ENCODE measurements at regions of chr18 and their contacts with region 1.

Region 1: GRCh38 chr18:50819728-50820378 is at the start of gene MRO:
- DNase-seq: peak; percentile 70
- ATAC-seq: peak; percentile 86
- H3K4me3 Mint-ChIP-seq: no peak within 1 kb of the TSS
- H3K27ac Mint-ChIP-seq: no peak within 1 kb of the TSS
- H3K4me1 Mint-ChIP-seq: peaks cover 28% of the 10 kb centered on the region
- H3K27me3 Mint-ChIP-seq: no peaks in the 10 kb centered on the region
- CTCF ChIP-seq: peak; percentile 90
- total RNA-seq, gene MRO: not detected in 2 replicates

Region 2: GRCh38 chr18:50806208-50806616 is 13.6 kb before region 1 on chr18:
- CTCF ChIA-PET with region 1: interaction called, 5 read pairs
- POLR2A ChIA-PET with region 1: interaction called, 3 read pairs
- intact Hi-C with region 1: loop called (anchors 1 kb)
- DNase-seq: no peak
- ATAC-seq: peak; percentile 74
- H3K4me3 Mint-ChIP-seq: peak overlapping the region; percentile 39
- H3K27ac Mint-ChIP-seq: peak overlapping the region; percentile 3
- H3K4me1 Mint-ChIP-seq: peaks cover 39% of the 10 kb centered on the region
- H3K27me3 Mint-ChIP-seq: no peaks in the 10 kb centered on the region
- CTCF ChIP-seq: no peak

Region 3: DNA sequence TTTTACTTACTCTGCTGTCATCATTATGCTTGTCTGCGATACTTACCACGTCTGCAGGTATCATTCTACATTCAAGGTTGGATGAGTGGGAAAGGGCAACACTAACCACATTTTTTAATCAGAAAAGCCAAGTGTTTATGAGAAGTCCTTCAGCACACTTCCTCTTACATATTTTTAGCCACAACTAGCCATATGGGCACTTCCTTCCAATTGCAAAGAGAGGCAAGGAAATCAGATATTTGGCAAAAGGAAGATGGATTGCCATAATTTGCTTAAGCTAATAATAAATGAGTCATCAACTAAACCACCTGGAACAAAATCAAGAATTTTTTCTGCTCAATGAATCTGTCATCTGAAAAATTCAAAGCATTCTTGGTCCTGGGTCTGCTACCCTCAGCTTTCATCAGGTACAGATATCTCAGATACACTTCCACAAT is 16.7 kb after region 1 on chr18:
- CTCF ChIA-PET with region 1: interaction called, 15 read pairs
- POLR2A ChIA-PET with region 1: interaction called, 10 read pairs
- intact Hi-C with region 1: no loop called
- DNase-seq: no peak
- ATAC-seq: peak; percentile 80
- H3K4me3 Mint-ChIP-seq: peak overlapping the region; percentile 16
- H3K27ac Mint-ChIP-seq: peak overlapping the region; percentile 35
- H3K4me1 Mint-ChIP-seq: peaks cover 30% of the 10 kb centered on the region
- H3K27me3 Mint-ChIP-seq: no peaks in the 10 kb centered on the region
- CTCF ChIP-seq: no peak

Region 4: GRCh38 chr18:50878345-50879301 is 58.8 kb after region 1 on chr18 and contains the start of gene ME2:
- CTCF ChIA-PET with region 1: interaction called, 9 read pairs
- POLR2A ChIA-PET with region 1: interaction called, 17 read pairs
- intact Hi-C with region 1: loop called (anchors 1 kb)
- DNase-seq: peak; percentile 98
- ATAC-seq: peak; percentile 94
- H3K4me3 Mint-ChIP-seq: peak within 1 kb of the TSS; percentile 98
- H3K27ac Mint-ChIP-seq: peak within 1 kb of the TSS; percentile 97
- H3K4me1 Mint-ChIP-seq: peaks cover 31% of the 10 kb centered on the region
- H3K27me3 Mint-ChIP-seq: no peaks in the 10 kb centered on the region
- CTCF ChIP-seq: no peak
- total RNA-seq, gene ME2: 58.2 and 63.5 TPM in 2 replicates

Region 5: GRCh38 chr18:50967714-50968661 is 148.1 kb after region 1 on chr18 and contains the start of gene ELAC1:
- CTCF ChIA-PET with region 1: interaction called, 5 read pairs
- POLR2A ChIA-PET with region 1: interaction called, 4 read pairs
- intact Hi-C with region 1: loop called (anchors 1 kb)
- DNase-seq: peak; percentile 75
- ATAC-seq: peak; percentile 95
- H3K4me3 Mint-ChIP-seq: peak within 1 kb of the TSS; percentile 92
- H3K27ac Mint-ChIP-seq: peak within 1 kb of the TSS; percentile 89
- H3K4me1 Mint-ChIP-seq: peaks cover 11% of the 10 kb centered on the region
- H3K27me3 Mint-ChIP-seq: no peaks in the 10 kb centered on the region
- CTCF ChIP-seq: no peak
- total RNA-seq, gene ELAC1: 9.7 and 14.0 TPM in 2 replicates

Region 6: DNA sequence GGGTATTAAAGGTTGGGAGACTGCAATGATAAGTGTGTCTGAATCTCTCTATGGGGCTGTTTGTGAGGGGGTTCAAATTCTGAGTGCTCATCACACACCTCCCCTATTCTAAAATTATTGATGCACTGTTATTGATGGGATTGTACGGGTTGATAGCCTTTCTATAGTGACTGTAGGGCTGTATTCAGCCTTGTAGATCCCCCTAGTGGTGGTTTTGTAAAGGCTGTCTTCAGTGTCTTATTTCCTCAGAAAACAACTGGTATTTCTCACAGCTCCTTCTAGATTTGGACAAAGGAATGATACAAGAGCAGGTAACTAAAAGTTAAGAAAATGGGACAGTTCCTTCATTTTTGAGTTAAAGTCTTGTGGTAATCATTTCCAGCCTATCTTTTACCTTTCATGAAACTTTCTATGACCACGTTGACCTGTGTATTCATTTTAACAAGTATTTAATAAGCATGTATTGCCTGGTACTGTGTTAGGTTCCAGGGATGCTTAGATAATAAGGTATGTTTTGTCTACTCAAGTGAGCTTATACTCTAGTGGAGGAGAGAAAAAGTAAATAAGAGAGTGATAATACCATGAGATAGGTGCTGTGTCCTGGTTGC is 231.4 kb after region 1 on chr18:
- CTCF ChIA-PET with region 1: interaction called, 73 read pairs
- POLR2A ChIA-PET with region 1: interaction called, 5 read pairs
- intact Hi-C with region 1: loop called (anchors 1 kb)
- DNase-seq: no peak
- ATAC-seq: peak; percentile 86
- H3K4me3 Mint-ChIP-seq: no peak overlapping the region
- H3K27ac Mint-ChIP-seq: peak overlapping the region; percentile 15
- H3K4me1 Mint-ChIP-seq: peaks cover 20% of the 10 kb centered on the region
- H3K27me3 Mint-ChIP-seq: no peaks in the 10 kb centered on the region
- CTCF ChIP-seq: peak; percentile 70

Region 7: DNA sequence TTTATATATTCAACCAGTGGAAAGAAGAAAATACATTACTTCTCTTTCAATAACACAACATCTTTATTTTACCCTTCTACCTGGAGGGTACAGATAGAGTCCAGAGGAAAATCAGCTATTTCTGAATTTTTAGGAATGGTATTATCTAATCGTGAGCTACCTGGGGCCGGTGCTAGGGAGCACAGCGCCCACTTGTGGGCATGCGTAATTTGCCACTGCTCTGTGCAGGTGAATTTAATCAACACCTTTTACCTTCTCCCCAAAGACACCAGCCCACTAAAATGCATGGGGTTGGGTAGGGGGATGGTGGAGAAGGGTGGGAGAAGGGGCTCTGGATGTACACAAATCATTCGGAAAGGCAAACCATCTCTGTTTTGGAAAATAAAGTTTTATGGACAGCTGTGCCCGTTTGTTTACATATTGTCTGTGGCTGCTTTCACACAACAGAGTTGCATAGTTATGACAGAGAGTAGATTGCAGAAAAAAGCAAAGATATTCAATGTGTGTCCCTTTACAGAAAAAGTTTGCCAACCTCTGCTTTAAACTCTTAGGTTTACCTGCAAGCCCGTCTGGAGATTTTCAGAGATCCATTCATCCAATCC is 1468.7 kb after region 1 on chr18:
- CTCF ChIA-PET with region 1: no interaction called
- POLR2A ChIA-PET with region 1: no interaction called
- intact Hi-C with region 1: loop called (anchors 5 kb)
- DNase-seq: no peak
- ATAC-seq: no peak
- H3K4me3 Mint-ChIP-seq: no peak overlapping the region
- H3K27ac Mint-ChIP-seq: no peak overlapping the region
- H3K4me1 Mint-ChIP-seq: no peaks in the 10 kb centered on the region
- H3K27me3 Mint-ChIP-seq: no peaks in the 10 kb centered on the region
- CTCF ChIP-seq: no peak